Right ventricle myocardium inferior (tissue), 1 donor: ENCODE measurements at regions of chr3 and their contacts with region 1.

Region 1: GRCh38 chr3:72270072-72270681 is 485.2 kb upstream of the PROK2 start:
- DNase-seq: peak; percentile 91
- ATAC-seq: peak; percentile 92

Region 2: GRCh38 chr3:70333080-70333479 is 1937.1 kb before region 1 on chr3:
- intact Hi-C with region 1: no loop called
- DNase-seq: no peak
- ATAC-seq: no peak

Region 3: DNA sequence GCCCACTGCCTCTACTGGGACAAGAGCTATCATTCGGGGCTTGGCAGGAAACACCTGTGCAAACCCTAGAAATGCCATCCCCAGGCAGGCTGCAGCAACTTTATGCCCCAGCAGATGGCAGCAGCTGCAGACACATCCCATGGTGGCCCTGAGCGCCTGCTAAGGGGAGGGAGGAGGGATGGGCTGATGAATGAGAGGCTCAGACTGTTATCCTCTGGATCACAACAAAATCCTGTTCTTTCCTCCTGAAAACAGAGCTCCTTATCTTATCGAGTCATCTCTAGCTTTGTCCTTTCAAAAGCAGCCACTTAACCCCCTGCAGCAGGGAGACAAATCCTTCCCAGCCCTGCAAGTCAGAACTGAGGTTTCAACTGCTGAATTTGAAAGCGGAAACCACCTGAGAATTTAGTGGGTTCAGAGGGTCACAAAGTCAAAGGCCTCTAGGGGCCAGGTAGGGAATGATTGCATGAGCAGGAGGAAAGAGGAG is 394.7 kb before region 1 on chr3:
- intact Hi-C with region 1: loop called (anchors 5 kb)
- DNase-seq: peak; percentile 85
- ATAC-seq: peak; percentile 90

Region 4: DNA sequence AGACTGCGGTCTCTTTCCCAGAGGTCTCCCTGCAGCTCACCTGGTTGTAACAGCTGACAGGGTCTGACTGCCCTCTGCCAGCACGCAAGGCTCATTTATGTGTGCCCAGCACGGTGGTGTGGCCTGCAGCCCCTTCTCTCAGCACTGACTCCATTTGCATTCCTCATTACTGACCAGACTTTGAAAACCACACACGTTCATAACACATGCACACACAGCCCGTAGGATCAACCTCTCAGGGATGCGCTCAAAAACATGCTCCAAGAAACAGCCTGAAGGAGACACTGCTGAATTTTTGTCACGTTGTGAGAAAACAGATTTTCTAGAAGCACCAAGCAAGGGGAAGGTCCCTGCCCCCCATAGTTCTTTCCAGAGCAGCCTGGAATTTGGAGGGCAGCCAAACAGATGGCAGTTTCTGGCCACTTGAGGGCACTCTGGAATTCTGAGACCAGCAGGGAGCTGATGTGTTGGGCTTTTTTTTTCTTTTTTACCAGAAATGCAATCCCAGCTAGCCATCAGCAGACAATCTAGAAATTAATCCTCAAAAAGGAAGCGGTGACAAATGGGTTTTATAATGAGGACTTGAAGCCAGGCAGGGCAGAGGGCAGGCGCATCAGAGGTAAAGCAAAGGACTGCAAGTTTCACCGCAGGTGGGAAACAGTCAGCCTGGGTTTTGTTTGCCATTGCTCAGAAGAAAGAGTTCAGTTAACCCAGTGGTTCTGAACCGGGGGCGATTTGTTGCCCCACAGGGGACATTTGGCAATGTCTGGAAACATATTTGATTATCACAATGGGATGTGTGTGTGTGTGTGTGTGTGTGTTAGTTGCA is 314.7 kb before region 1 on chr3:
- intact Hi-C with region 1: loop called (anchors 10 kb)
- DNase-seq: no peak
- ATAC-seq: peak; percentile 58

Region 5: DNA sequence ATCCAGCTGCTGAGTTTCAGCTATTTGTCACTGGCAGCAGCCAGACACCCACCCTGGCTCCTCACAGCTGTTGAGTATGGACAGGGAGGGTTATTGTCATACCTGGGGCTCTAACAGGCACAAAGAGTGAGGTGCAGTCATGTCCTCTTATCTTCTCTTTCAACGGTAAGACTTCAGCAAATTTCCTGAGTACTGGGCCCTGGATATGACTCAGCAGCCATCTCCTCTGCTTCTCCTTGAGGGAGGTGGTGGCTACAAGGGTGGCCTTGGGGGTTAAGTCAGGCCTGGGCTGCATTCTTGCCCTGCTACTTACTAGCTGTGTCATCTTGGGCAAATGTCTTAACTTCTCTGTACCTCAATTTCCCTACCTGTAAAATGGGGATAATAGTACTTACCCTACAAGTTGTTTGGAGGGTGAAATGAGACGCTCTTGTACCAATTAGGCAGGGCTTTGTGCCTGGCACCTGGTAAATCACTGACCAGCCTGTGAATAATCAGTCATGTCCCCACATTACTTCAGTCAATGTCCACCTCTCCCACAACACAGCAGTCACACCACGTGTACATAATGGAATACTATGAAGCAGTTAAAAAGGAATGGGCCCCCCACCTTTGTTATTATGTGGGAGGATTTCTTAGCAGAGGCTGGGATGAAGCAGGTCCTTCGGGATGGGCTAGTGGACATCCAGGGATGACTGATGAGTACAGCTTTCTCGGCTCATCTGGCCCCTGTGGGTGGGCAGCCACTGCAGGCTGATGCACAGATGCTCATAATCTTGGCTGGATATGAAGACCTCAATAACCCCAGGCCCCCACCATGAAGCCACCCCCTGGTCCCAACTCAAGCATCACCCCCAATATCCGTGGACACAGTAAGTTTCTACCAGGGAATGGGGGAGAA is 49.3 kb after region 1 on chr3:
- intact Hi-C with region 1: loop called (anchors 5 kb)
- DNase-seq: no peak
- ATAC-seq: no peak

Region 6: GRCh38 chr3:72336821-72337479 is 66.8 kb after region 1 on chr3:
- intact Hi-C with region 1: loop called (anchors 2 kb)
- DNase-seq: peak; percentile 90
- ATAC-seq: peak; percentile 87

Region 7: DNA sequence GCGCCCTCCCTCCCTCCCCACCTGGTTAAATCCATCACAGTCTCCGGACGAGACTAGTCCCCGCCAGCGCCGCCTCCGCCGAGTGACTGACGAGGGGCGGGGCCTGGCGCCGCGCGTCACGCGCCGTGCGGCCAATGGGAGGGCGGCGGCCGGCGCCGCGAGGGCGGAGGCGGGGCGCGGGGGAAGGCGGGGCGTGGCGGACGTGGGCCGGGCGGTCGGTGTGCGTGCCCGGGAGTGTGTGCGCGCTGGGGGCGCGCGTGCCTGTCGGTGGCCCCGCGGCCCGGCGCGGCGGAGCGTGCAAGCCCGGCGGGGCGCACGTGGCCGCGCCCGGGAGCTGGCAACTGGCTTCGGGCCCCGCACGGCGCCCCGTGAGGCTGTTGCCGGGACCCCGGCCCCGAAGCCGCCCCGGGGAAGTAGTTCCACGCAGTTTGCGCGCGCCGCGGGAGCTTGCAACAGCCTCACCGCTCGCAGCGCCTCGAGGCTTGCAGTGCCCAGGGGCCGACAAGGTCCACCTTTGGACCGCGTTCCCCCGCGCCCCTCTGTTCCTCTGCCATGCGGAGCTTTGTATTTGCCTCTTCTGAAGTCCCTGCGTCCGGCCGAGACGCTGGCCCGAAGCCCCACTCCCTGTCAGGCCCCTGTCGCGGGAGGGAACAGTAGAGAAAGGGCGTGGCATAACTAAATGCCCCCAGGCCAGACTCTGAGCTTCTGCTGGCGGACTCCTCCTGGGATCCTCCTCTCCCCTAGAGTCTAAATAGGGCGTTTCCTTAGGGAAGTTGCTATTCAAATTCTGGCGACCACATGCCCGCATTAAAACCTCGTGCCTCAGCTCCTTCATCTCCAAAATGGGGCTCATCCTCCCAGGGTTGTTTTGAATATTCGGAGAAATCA is 177.1 kb after region 1 on chr3:
- intact Hi-C with region 1: loop called (anchors 10 kb)
- DNase-seq: peak; percentile 96
- ATAC-seq: peak; percentile 98